Gastrocnemius medialis (tissue), 4 donors: ENCODE measurements at regions of chr12 and their contacts with region 1.

Region 1: GRCh38 chr12:108722992-108723766 is 8.1 kb downstream of the CORO1C start:
- DNase-seq: peak in 1 of 2 donors; percentile 64
- ATAC-seq: peak; percentile 61 to 85
- H3K4me3 ChIP-seq: peak overlapping the region in 2 of 4 donors; percentile 7 to 12
- H3K27ac ChIP-seq: peak overlapping the region; percentile 85 to 100 (median 98)
- H3K4me1 ChIP-seq: peaks cover 72 to 86% of the 10 kb centered on the region in 2 donors
- H3K27me3 ChIP-seq: no peaks in the 10 kb centered on the region
- CTCF ChIP-seq: no peak
- POLR2A ChIP-seq: peak in 1 of 2 donors; percentile 12

Region 2: DNA sequence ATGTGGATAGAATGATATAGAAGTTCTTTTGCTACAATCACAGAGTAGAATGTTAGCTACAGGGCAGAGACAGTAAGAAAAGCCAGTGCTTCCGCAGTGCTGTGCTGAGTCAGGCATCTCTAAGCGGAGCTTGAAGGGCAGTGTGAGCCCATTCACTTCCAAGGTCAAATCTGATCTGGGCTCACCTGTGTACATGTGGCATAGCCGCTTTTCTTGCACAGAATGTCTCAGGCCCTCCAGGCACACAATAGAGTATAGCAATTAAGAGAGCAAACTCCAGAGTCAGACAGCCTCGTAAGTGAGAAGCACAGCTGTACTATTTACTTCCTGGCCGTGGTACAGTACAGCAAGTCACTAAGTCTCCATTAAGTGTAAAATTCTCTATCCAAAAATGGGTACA is 18.7 kb before region 1 on chr12:
- in situ Hi-C with region 1: no loop called
- intact Hi-C with region 1: loop called (anchors 1 kb)
- DNase-seq: no peak
- ATAC-seq: peak in 1 of 2 donors; percentile 20
- H3K4me3 ChIP-seq: peak overlapping the region in 1 of 4 donors; percentile 11
- H3K27ac ChIP-seq: peak overlapping the region; percentile 92 to 98 (median 96)
- H3K4me1 ChIP-seq: peaks cover 81 to 89% of the 10 kb centered on the region in 2 donors
- H3K27me3 ChIP-seq: no peaks in the 10 kb centered on the region
- CTCF ChIP-seq: no peak
- POLR2A ChIP-seq: no peak

Region 3: DNA sequence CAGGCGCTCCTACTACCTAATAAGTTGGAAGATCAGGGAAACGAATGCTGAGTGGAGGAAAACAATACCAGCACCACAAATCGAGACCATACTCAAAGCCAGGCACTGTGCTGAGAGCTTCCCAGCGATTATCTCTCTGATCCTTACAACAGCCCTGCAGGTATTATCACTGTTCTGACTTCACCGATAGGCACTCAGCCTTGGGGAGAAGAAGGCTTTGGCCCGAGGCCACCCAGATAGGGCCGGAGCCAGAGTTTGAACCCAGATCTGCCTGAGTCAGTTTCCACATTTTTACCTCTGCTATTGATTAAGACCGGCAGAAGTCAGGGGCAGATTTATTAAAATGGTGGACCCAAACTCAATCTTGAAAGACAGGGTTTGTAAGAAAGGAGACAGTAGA is 292.8 kb after region 1 on chr12:
- in situ Hi-C with region 1: no loop called
- intact Hi-C with region 1: no loop called
- DNase-seq: no peak
- ATAC-seq: no peak
- H3K4me3 ChIP-seq: no peak overlapping the region
- H3K27ac ChIP-seq: no peak overlapping the region
- H3K4me1 ChIP-seq: no peaks in the 10 kb centered on the region
- H3K27me3 ChIP-seq: no peaks in the 10 kb centered on the region
- CTCF ChIP-seq: no peak
- POLR2A ChIP-seq: no peak